ENCODE measurements at regions of chr1 and their contacts with region 1.

Region 1: GRCh38 chr1:47437447-47438164 is at the start of gene FOXD2:
- DNase-seq: peak; percentile 80
- H3K4me3 Mint-ChIP-seq: peak within 1 kb of the TSS; percentile 94
- H3K27ac Mint-ChIP-seq: peak within 1 kb of the TSS; percentile 88
- H3K4me1 Mint-ChIP-seq: peaks cover 30% of the 10 kb centered on the region
- H3K27me3 Mint-ChIP-seq: peaks cover 29% of the 10 kb centered on the region
- total RNA-seq, gene FOXD2: 0.17 and 0.21 TPM in 2 replicates

Region 2: DNA sequence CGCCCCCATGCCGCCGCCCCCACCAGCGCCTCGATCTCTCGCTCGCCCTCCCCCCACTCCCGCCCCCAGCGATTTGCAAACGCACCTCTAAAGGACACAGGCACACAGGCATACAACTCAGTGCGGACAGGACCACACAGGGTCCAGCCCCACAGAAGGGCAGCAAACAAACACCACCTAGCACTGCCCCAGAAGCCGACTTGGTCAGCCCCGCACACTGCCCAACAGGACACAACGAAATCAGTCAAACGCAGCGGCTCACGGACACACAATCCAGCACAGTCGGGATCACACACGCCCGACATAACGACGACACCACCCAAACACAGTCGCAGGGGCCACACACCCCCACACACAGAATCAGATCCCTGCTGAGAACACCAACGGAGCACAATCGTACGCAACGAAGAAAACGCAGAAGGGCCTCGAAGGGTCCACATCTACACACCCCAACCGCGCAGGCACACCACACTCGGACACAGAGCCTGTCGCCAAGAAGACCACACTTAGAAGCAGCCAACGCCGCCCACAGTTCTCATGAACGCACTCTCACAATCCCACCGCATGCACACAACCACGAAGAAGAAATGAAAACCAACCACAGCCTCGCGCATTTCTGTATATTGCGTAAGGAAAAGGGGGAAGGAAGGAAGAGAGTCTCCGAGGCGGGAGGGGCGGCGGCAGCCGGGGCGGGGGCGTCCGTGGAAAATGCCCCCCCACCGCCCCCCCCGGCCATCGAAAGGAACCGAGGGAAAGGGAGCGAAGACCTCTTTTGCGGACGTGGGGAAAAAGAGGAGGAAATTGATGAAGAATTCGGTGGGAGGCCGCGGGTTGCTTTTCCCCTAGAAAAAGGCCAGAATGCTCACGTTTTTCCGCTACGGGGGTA is 206.1 kb before region 1 on chr1:
- intact Hi-C with region 1: loop called (anchors 2 kb)
- DNase-seq: no peak
- H3K4me3 Mint-ChIP-seq: peak overlapping the region; percentile 73
- H3K27ac Mint-ChIP-seq: peak overlapping the region; percentile 86
- H3K4me1 Mint-ChIP-seq: peaks cover 14% of the 10 kb centered on the region
- H3K27me3 Mint-ChIP-seq: peaks cover 87% of the 10 kb centered on the region

Region 3: DNA sequence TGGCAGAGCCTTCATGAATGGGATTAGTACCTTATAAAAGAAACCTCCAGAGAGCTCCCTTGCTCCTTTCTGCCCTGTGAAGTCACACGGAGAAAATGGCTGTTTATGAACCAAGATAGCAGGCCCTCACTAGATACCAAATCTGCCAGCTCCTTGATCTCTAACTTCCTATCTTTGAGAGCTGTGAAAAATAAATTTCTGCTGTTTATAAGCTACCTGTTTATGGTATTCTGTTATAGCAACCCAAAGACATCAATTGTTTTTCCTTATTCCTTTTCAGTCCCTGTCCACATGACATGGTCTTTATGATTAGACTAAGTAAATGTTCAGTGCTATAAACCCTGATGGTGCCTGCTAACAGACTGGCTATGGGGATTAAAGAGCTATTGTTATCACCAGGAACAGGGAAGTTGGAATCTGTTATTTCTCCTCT is 114.0 kb before region 1 on chr1:
- intact Hi-C with region 1: no loop called
- DNase-seq: no peak
- H3K4me3 Mint-ChIP-seq: no peak overlapping the region
- H3K27ac Mint-ChIP-seq: no peak overlapping the region
- H3K4me1 Mint-ChIP-seq: no peaks in the 10 kb centered on the region
- H3K27me3 Mint-ChIP-seq: no peaks in the 10 kb centered on the region

Region 4: GRCh38 chr1:47333922-47334764 is 103.5 kb before region 1 on chr1:
- intact Hi-C with region 1: loop called (anchors 1 kb)
- DNase-seq: peak; percentile 73
- H3K4me3 Mint-ChIP-seq: no peak overlapping the region
- H3K27ac Mint-ChIP-seq: peak overlapping the region; percentile 97
- H3K4me1 Mint-ChIP-seq: peaks cover 19% of the 10 kb centered on the region
- H3K27me3 Mint-ChIP-seq: no peaks in the 10 kb centered on the region

Region 5: GRCh38 chr1:47362828-47363227 is 74.8 kb before region 1 on chr1:
- intact Hi-C with region 1: no loop called
- DNase-seq: no peak
- H3K4me3 Mint-ChIP-seq: no peak overlapping the region
- H3K27ac Mint-ChIP-seq: no peak overlapping the region
- H3K4me1 Mint-ChIP-seq: peaks cover 5% of the 10 kb centered on the region
- H3K27me3 Mint-ChIP-seq: no peaks in the 10 kb centered on the region

Region 6: DNA sequence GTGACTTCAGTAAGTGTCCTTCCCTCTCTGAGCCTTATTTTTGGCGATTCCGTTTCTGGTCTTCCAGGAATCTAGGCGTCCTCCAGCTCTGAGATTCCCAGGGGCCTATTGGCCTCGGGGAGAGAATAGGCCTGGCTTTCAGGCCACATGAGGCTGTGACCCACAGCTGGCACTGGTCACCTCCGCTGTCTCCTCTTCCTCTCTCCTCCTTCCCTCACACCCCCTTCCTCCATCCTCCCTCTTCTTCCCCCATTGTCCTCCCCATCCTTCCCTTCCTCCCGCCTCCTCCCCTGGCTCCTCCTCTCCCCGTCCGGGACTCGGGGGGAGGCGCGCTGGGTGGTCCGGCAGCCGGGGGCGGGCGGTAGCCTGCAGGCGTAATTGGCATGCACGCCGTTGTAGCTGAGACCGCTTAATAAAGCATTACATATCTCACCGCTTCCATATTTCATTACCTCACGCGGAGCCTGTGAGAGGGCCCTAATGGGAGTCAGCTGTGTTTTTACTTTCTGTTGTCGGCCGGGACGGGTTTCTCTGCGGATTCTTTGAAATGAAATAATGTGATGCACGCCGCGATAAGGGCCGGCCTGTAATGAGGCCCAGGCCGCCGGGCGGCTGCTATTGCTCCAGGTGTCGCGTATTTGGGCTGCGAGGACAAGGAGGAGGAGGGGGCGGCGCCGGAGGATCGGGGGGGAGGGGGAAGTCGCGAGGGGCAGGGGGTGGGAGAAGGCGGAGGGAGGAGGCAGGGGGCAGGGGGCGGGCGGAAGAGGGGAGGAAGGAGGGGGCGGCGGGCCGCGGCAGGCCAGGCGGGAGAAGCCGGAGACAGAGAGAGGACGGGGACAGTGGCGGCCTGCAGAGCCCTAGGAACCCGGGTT is 95.6 kb after region 1 on chr1:
- intact Hi-C with region 1: loop called (anchors 5 kb)
- DNase-seq: no peak
- H3K4me3 Mint-ChIP-seq: no peak overlapping the region
- H3K27ac Mint-ChIP-seq: no peak overlapping the region
- H3K4me1 Mint-ChIP-seq: no peaks in the 10 kb centered on the region
- H3K27me3 Mint-ChIP-seq: peaks cover 50% of the 10 kb centered on the region

Region 7: GRCh38 chr1:48471691-48472576 is 1034.3 kb after region 1 on chr1 and contains the start of gene SPATA6:
- intact Hi-C with region 1: loop called (anchors 2 kb)
- DNase-seq: peak; percentile 89
- H3K4me3 Mint-ChIP-seq: peak within 1 kb of the TSS; percentile 85
- H3K27ac Mint-ChIP-seq: peak within 1 kb of the TSS; percentile 40
- H3K4me1 Mint-ChIP-seq: peaks cover 12% of the 10 kb centered on the region
- H3K27me3 Mint-ChIP-seq: peaks cover 36% of the 10 kb centered on the region
- total RNA-seq, gene SPATA6: 0.91 and 1.0 TPM in 2 replicates

Measured in activated T-helper 1 cell treated with anti-CD3 and anti-CD28 coated beads, Interleukin-12 subunit alpha, Interleukin-12 subunit beta, Interleukin-2, Interleukin-4 antibody, amounts not matched to agents 30 ng/mL and 10 ng/mL and 1 ng/mL, durations not matched to agents 14 hours and 24 hours and 36 hours (primary cell).